Psoas muscle (tissue), 8 donors: ENCODE measurements at regions of chr11 and their contacts with region 1.

Region 1: GRCh38 chr11:22677153-22677903 is 10.9 kb downstream of the GAS2 start:
- DNase-seq: no peak
- ATAC-seq: peak; percentile 29 to 75 (median 62)
- H3K4me3 ChIP-seq: no peak overlapping the region
- H3K27ac ChIP-seq: peak overlapping the region; percentile 75
- H3K4me1 ChIP-seq: peaks cover 34% of the 10 kb centered on the region
- H3K27me3 ChIP-seq: no peaks in the 10 kb centered on the region
- CTCF ChIP-seq: no peak

Region 2: DNA sequence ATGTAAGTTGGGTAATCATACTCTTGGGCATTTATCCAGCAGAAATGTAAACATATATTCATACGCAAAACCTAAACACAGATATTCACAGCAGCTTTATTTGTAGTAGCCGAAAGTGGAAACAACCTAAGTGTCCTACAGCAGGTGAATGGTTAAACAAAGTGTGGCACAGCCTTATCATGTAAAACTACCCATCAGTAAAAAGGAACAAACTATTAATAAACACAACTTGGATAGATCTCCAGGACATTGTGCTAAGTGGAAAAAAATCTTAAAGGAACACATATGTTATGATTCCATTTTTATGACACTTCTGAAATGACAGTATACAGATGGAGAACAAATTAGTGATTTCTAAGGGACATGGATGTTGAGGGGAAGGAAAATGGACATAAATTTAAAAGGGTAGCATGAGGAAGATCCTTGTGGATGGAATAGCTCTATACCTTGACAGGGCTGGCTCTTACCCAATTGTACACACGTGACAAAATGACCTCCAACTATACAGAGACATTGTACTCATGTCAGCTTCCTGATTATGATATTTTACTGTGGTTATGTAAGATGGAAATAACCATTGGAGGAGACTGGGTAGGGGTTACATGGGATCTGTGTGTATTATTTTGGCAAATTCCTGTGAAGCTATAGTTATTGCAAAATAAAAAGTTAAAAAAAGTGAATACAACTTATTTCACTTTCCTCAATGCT is 469.0 kb before region 1 on chr11:
- intact Hi-C with region 1: no loop called
- DNase-seq: no peak
- ATAC-seq: peak; percentile 27 to 92 (median 56)
- H3K4me3 ChIP-seq: peak overlapping the region; percentile 0
- H3K27ac ChIP-seq: peak overlapping the region; percentile 13
- H3K4me1 ChIP-seq: peaks cover 46% of the 10 kb centered on the region
- H3K27me3 ChIP-seq: no peaks in the 10 kb centered on the region
- CTCF ChIP-seq: no peak

Region 3: GRCh38 chr11:22640862-22641261 is 36.5 kb before region 1 on chr11:
- intact Hi-C with region 1: no loop called
- DNase-seq: no peak
- ATAC-seq: no peak
- H3K4me3 ChIP-seq: no peak overlapping the region
- H3K27ac ChIP-seq: no peak overlapping the region
- H3K4me1 ChIP-seq: no peaks in the 10 kb centered on the region
- H3K27me3 ChIP-seq: peaks cover 0 to 2% (median 0%) of the 10 kb centered on the region in 3 donors
- CTCF ChIP-seq: no peak

Region 4: GRCh38 chr11:22720457-22720856 is 43.1 kb after region 1 on chr11:
- intact Hi-C with region 1: loop called (anchors 5 kb)
- DNase-seq: no peak
- ATAC-seq: no peak
- H3K4me3 ChIP-seq: no peak overlapping the region
- H3K27ac ChIP-seq: no peak overlapping the region
- H3K4me1 ChIP-seq: peaks cover 8% of the 10 kb centered on the region
- H3K27me3 ChIP-seq: no peaks in the 10 kb centered on the region
- CTCF ChIP-seq: no peak

Region 5: GRCh38 chr11:22875869-22876473 is 198.6 kb after region 1 on chr11:
- intact Hi-C with region 1: no loop called
- DNase-seq: peak in 1 of 2 donors; percentile 11
- ATAC-seq: peak in 3 of 4 donors; percentile 61 to 86 (median 71)
- H3K4me3 ChIP-seq: no peak overlapping the region
- H3K27ac ChIP-seq: no peak overlapping the region
- H3K4me1 ChIP-seq: no peaks in the 10 kb centered on the region
- H3K27me3 ChIP-seq: no peaks in the 10 kb centered on the region
- CTCF ChIP-seq: peak; percentile 71